ENCODE measurements at regions of chr4 and their contacts with region 1.

Region 1: GRCh38 chr4:86981789-86982188 is 47.0 kb downstream of the AFF1 start:
- H3K4me3 Mint-ChIP-seq: peak overlapping the region; percentile 27
- H3K27ac Mint-ChIP-seq: peak overlapping the region; percentile 95
- H3K4me1 Mint-ChIP-seq: peaks cover 39% of the 10 kb centered on the region
- H3K27me3 Mint-ChIP-seq: no peaks in the 10 kb centered on the region

Region 2: GRCh38 chr4:86934771-86935565 is 46.8 kb before region 1 on chr4 and contains the start of gene AFF1:
- intact Hi-C with region 1: loop called (anchors 2 kb)
- H3K4me3 Mint-ChIP-seq: peak within 1 kb of the TSS; percentile 97
- H3K27ac Mint-ChIP-seq: peak within 1 kb of the TSS; percentile 95
- H3K4me1 Mint-ChIP-seq: peaks cover 45% of the 10 kb centered on the region
- H3K27me3 Mint-ChIP-seq: no peaks in the 10 kb centered on the region

Region 3: DNA sequence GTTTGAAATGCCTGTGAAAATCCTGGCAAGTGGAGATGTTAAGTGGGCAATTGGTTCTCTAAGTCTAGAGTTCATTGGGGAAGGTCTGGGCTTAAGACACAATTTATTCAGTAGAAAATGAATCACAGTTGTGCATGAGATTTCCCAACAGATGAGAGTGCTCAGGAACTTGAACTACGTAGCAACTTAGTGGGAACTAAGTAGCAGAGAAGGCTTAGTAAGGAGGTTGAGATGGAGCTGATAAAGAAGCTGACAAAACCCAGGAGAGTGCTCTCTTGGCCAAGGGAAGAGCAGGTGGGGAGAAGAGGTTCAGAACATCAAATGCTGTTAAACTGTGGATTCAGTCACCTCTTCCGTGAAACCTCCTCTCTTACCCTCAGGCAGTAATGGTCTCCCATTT is 14.0 kb before region 1 on chr4:
- intact Hi-C with region 1: loop called (anchors 2 kb)
- H3K4me3 Mint-ChIP-seq: no peak overlapping the region
- H3K27ac Mint-ChIP-seq: no peak overlapping the region
- H3K4me1 Mint-ChIP-seq: peaks cover 27% of the 10 kb centered on the region
- H3K27me3 Mint-ChIP-seq: no peaks in the 10 kb centered on the region